HEK293 (cell line): ENCODE measurements at regions of chr1 and their contacts with region 1.

Region 1: GRCh38 chr1:20574686-20575540 is 14.0 kb upstream of the CDA start:
- H3K4me3 ChIP-seq: no peak overlapping the region
- H3K27ac ChIP-seq: no peak overlapping the region
- H3K4me1 ChIP-seq: no peaks in the 10 kb centered on the region
- CTCF ChIP-seq: peak; percentile 68

Region 2: GRCh38 chr1:20472860-20473711 is 101.8 kb before region 1 on chr1:
- CTCF ChIA-PET with region 1: no interaction called
- POLR2A ChIA-PET with region 1: no interaction called
- H3K4me3 ChIP-seq: no peak overlapping the region
- H3K27ac ChIP-seq: no peak overlapping the region
- H3K4me1 ChIP-seq: peaks cover 4% of the 10 kb centered on the region
- CTCF ChIP-seq: no peak

Region 3: DNA sequence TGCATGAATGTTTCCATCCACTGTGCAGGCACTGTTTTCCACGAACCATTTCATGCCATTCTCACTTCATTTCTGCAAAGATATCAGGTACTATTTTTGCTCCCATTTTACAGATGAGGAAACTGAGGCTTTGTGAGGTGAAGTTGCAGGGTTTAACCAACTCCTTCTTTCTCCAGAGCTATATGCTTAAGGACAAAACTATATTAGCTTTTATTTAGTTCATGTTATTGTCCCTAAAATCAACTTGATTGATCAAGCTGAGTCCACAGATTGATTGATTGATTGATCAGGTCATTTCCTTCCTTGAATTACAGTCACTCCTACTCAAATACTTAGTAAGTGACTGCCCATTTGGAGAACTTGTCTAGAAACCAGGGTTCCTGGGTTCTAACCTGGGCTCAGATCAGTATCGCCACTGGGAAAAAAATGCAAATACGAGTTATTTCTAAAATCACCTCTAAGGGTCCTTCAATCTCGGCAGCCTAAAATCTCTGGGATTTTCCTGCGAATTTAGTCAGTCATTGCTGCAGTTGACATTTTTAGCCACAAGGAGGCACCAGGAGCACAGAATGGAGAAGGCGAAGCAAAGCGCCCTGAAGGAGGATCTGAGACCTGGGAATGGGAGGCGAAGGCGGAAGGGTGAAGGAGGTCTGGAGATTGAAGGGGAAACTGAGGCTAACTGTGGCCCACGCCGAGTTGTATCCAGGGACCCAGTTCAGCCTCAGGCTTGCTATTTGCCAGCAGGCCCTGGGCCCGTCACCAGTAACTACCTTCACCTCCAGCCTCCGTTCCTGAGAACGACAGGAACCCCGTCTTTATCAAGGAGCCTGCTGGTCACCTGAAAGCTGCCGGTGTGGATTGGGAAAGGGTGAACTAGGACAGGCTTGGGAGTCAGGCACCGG is 52.7 kb before region 1 on chr1:
- CTCF ChIA-PET with region 1: interaction called, 12 read pairs
- POLR2A ChIA-PET with region 1: no interaction called
- H3K4me3 ChIP-seq: no peak overlapping the region
- H3K27ac ChIP-seq: no peak overlapping the region
- H3K4me1 ChIP-seq: no peaks in the 10 kb centered on the region
- CTCF ChIP-seq: peak; percentile 88

Region 4: GRCh38 chr1:20589331-20590278 is 14.7 kb after region 1 on chr1:
- CTCF ChIA-PET with region 1: interaction called, 13 read pairs
- POLR2A ChIA-PET with region 1: interaction called, 4 read pairs
- H3K4me3 ChIP-seq: no peak overlapping the region
- H3K27ac ChIP-seq: no peak overlapping the region
- H3K4me1 ChIP-seq: peaks cover 3% of the 10 kb centered on the region; the same call in 1 of the 2 replicates
- CTCF ChIP-seq: no peak

Region 5: GRCh38 chr1:20640183-20640597 is 65.3 kb after region 1 on chr1:
- CTCF ChIA-PET with region 1: interaction called, 105 read pairs
- POLR2A ChIA-PET with region 1: interaction called, 3 read pairs
- H3K4me3 ChIP-seq: no peak overlapping the region
- H3K27ac ChIP-seq: no peak overlapping the region
- H3K4me1 ChIP-seq: no peaks in the 10 kb centered on the region
- CTCF ChIP-seq: peak; percentile 70